Endothelial cell of umbilical vein (primary cell): ENCODE measurements at regions of chr13 and their contacts with region 1.

Region 1: GRCh38 chr13:75181906-75182305 is 300.1 kb downstream of the TBC1D4 start:
- DNase-seq: peak; percentile 96
- H3K4me3 ChIP-seq: no peak overlapping the region
- H3K27ac ChIP-seq: peak overlapping the region; percentile 65
- H3K4me1 ChIP-seq: peaks cover 32% of the 10 kb centered on the region
- H3K27me3 ChIP-seq: no peaks in the 10 kb centered on the region
- CTCF ChIP-seq: no peak
- POLR2A ChIP-seq: peak; percentile 59

Region 2: GRCh38 chr13:74243637-74244526 is 938.0 kb before region 1 on chr13:
- CTCF ChIA-PET with region 1: no interaction called
- POLR2A ChIA-PET with region 1: no interaction called
- dilution Hi-C with region 1: no loop called
- intact Hi-C with region 1: loop called (anchors 5 kb)
- DNase-seq: peak; percentile 59
- H3K4me3 ChIP-seq: no peak overlapping the region
- H3K27ac ChIP-seq: peak overlapping the region; percentile 77
- H3K4me1 ChIP-seq: peaks cover 13% of the 10 kb centered on the region
- H3K27me3 ChIP-seq: no peaks in the 10 kb centered on the region
- CTCF ChIP-seq: no peak
- POLR2A ChIP-seq: no peak

Region 3: GRCh38 chr13:74825152-74825937 is 356.6 kb before region 1 on chr13:
- CTCF ChIA-PET with region 1: no interaction called
- POLR2A ChIA-PET with region 1: no interaction called
- dilution Hi-C with region 1: no loop called
- intact Hi-C with region 1: loop called (anchors 10 kb)
- DNase-seq: peak; percentile 85
- H3K4me3 ChIP-seq: no peak overlapping the region
- H3K27ac ChIP-seq: peak overlapping the region; percentile 79
- H3K4me1 ChIP-seq: peaks cover 15% of the 10 kb centered on the region
- H3K27me3 ChIP-seq: no peaks in the 10 kb centered on the region
- CTCF ChIP-seq: no peak
- POLR2A ChIP-seq: no peak

Region 4: DNA sequence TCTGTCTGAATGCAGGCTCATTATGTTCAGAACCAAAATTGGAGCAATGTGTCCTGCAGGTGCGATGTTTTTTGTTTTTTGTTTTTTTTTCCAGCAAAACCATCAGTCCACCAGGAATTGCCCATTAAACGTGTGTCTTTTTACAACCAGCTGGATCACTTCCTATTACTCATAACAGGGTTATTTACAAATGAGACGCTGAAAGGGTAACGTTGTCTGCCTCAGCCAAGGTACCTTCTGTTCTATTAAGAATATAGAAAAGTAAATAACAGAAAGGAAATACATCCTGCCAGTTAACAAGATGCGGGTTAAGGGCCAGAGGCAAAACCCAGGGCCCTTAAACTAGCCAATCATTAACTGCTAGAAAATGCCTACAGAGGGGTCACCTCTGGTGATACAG is 290.3 kb before region 1 on chr13:
- CTCF ChIA-PET with region 1: no interaction called
- POLR2A ChIA-PET with region 1: no interaction called
- dilution Hi-C with region 1: no loop called
- intact Hi-C with region 1: loop called (anchors 1 kb)
- DNase-seq: peak; percentile 86
- H3K4me3 ChIP-seq: peak overlapping the region in 1 of 3 experiments; percentile 3
- H3K27ac ChIP-seq: peak overlapping the region; percentile 92
- H3K4me1 ChIP-seq: peaks cover 19% of the 10 kb centered on the region
- H3K27me3 ChIP-seq: no peaks in the 10 kb centered on the region
- CTCF ChIP-seq: no peak
- POLR2A ChIP-seq: no peak

Region 5: GRCh38 chr13:75365724-75366173 is 183.8 kb after region 1 on chr13:
- CTCF ChIA-PET with region 1: no interaction called
- POLR2A ChIA-PET with region 1: no interaction called
- dilution Hi-C with region 1: no loop called
- intact Hi-C with region 1: loop called (anchors 5 kb)
- DNase-seq: peak; percentile 84
- H3K4me3 ChIP-seq: peak overlapping the region; percentile 23 to 96 (median 68)
- H3K27ac ChIP-seq: peak overlapping the region; percentile 98
- H3K4me1 ChIP-seq: peaks cover 49% of the 10 kb centered on the region
- H3K27me3 ChIP-seq: no peaks in the 10 kb centered on the region
- CTCF ChIP-seq: peak; percentile 17 to 19
- POLR2A ChIP-seq: no peak